ENCODE measurements at regions of chr17 and their contacts with region 1.

Region 1: DNA sequence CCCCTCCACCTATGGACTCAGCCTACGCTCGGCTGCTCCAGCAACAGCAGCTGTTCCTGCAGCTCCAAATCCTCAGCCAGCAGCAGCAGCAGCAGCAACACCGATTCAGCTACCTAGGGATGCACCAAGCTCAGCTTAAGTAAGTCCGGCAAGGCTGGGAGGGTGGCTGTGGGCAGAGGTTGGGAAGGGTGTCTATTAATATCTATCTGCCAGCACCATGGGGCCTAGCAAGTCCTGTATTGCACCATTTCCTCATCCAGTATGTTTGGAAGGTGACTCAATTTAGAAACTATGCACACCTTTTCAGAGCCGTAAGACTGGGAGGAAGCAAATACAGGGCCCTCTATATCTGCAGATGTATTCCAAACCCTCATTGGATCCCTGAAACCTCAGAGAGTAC is 45.0 kb upstream of the ARHGAP44 start:
- H3K4me3 ChIP-seq: no peak overlapping the region
- H3K27ac ChIP-seq: no peak overlapping the region
- H3K4me1 ChIP-seq: peaks cover 2% of the 10 kb centered on the region; the same call in 1 of the 2 replicates
- CTCF ChIP-seq: no peak

Region 2: GRCh38 chr17:12180644-12181261 is 563.5 kb before region 1 on chr17:
- CTCF ChIA-PET with region 1: interaction called, 13 read pairs
- POLR2A ChIA-PET with region 1: no interaction called
- H3K4me3 ChIP-seq: no peak overlapping the region
- H3K27ac ChIP-seq: no peak overlapping the region
- H3K4me1 ChIP-seq: no peaks in the 10 kb centered on the region
- CTCF ChIP-seq: peak; percentile 22; the same call in 1 of the 2 replicates

Region 3: GRCh38 chr17:12545877-12546513 is 198.3 kb before region 1 on chr17:
- CTCF ChIA-PET with region 1: interaction called, 30 read pairs
- POLR2A ChIA-PET with region 1: no interaction called
- H3K4me3 ChIP-seq: no peak overlapping the region
- H3K27ac ChIP-seq: no peak overlapping the region
- H3K4me1 ChIP-seq: no peaks in the 10 kb centered on the region
- CTCF ChIP-seq: peak; percentile 35; the same call in 1 of the 2 replicates

Region 4: GRCh38 chr17:12712941-12713340 is 31.4 kb before region 1 on chr17:
- CTCF ChIA-PET with region 1: interaction called, 10 read pairs
- POLR2A ChIA-PET with region 1: no interaction called
- H3K4me3 ChIP-seq: no peak overlapping the region
- H3K27ac ChIP-seq: no peak overlapping the region
- H3K4me1 ChIP-seq: no peaks in the 10 kb centered on the region
- CTCF ChIP-seq: no peak

Region 5: GRCh38 chr17:12756786-12757185 is 12.5 kb after region 1 on chr17:
- CTCF ChIA-PET with region 1: interaction called, 15 read pairs
- POLR2A ChIA-PET with region 1: no interaction called
- H3K4me3 ChIP-seq: no peak overlapping the region
- H3K27ac ChIP-seq: no peak overlapping the region
- H3K4me1 ChIP-seq: no peaks in the 10 kb centered on the region
- CTCF ChIP-seq: no peak